Esophagus muscularis mucosa (tissue), 4 donors: ENCODE measurements at regions of chr9 and their contacts with region 1.

Region 1: GRCh38 chr9:111298731-111299598 is 31.1 kb downstream of the OR2K2 start:
- DNase-seq: no peak
- H3K4me3 ChIP-seq: peak overlapping the region in 3 of 4 donors; percentile 7 to 21 (median 10)
- H3K27ac ChIP-seq: peak overlapping the region; percentile 5 to 58 (median 43)
- H3K4me1 ChIP-seq: peaks cover 0 to 13% (median 7%) of the 10 kb centered on the region in 4 donors
- H3K27me3 ChIP-seq: peaks cover 0 to 4% (median 0%) of the 10 kb centered on the region in 4 donors
- CTCF ChIP-seq: peak; percentile 69 to 81 (median 79)
- EP300 ChIP-seq: no peak
- POLR2A ChIP-seq: no peak

Region 2: DNA sequence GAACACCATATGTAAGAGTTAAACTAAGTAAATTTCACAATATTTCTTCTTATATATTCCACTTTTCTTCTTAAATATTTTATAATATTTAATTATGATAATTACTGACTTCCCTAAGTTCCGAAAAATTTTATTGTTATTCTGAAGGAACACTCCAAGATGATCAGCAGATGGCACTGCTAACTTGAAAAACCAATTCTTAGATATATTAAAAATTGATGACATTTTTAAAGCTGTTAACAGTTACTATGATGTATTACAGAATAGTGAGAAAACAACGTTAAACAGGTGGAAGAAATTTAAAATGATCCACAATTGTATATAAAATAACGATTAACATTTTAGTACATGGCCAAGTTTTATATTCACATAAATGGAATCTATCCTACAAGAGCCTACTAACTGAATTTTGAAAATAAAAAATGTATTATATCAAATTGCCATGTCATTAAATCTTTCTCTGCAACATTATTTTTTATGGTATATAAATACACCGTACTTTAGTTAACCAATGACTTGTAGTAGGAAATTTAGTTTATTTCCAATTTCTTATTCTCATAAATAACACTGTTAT is 660.5 kb before region 1 on chr9:
- intact Hi-C with region 1: loop called (anchors 2 kb)
- DNase-seq: no peak
- H3K4me3 ChIP-seq: no peak overlapping the region
- H3K27ac ChIP-seq: no peak overlapping the region
- H3K4me1 ChIP-seq: no peaks in the 10 kb centered on the region
- H3K27me3 ChIP-seq: no peaks in the 10 kb centered on the region
- CTCF ChIP-seq: peak; percentile 33 to 43 (median 37)
- EP300 ChIP-seq: no peak
- POLR2A ChIP-seq: no peak

Region 3: DNA sequence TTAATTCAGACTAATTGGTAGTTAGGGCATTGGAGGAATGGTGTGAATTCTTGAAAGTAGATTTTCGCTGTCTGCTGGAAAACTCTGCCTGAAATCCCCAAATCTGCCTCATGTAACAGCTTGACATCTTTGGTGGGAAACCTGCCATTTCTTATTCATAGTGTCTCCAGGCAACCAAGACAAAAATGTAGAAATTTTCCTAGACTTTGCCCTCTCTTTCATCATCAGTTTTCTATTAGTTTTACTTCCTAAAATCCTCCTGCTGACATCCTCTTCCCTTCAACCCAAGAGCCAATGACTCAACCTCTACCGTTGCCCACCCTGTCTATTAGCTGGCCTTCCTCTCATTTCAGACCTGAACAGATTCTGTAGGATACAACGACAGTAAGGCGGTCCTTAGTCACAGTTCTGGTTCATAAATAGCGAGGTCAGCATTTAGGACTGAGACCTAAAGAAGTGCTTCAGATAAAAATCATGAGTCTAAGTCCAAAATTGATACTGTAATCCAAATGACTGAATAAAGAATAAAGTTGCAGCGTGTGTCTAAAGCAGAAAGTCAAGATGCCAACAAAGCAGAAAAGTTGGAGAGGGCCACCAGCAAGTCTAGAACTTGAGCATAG is 496.4 kb before region 1 on chr9:
- intact Hi-C with region 1: loop called (anchors 5 kb)
- DNase-seq: no peak
- H3K4me3 ChIP-seq: no peak overlapping the region
- H3K27ac ChIP-seq: peak overlapping the region in 1 of 4 donors; percentile 5
- H3K4me1 ChIP-seq: no peaks in the 10 kb centered on the region
- H3K27me3 ChIP-seq: no peaks in the 10 kb centered on the region
- CTCF ChIP-seq: no peak
- EP300 ChIP-seq: no peak
- POLR2A ChIP-seq: no peak

Region 4: GRCh38 chr9:111037381-111038305 is 261.3 kb before region 1 on chr9:
- intact Hi-C with region 1: loop called (anchors 5 kb)
- DNase-seq: no peak
- H3K4me3 ChIP-seq: peak overlapping the region; percentile 59 to 77 (median 66)
- H3K27ac ChIP-seq: peak overlapping the region; percentile 74 to 87 (median 84)
- H3K4me1 ChIP-seq: peaks cover 8 to 29% (median 20%) of the 10 kb centered on the region in 4 donors
- H3K27me3 ChIP-seq: peaks cover 0 to 59% (median 11%) of the 10 kb centered on the region in 4 donors
- CTCF ChIP-seq: no peak
- EP300 ChIP-seq: no peak
- POLR2A ChIP-seq: no peak